ENCODE measurements at regions of chr10 and their contacts with region 1.

Region 1: GRCh38 chr10:49300140-49300974 is 1.4 kb downstream of the C10orf71 start:
- DNase-seq: no peak
- ATAC-seq: peak; percentile 10
- H3K4me3 Mint-ChIP-seq: no peak overlapping the region
- H3K27ac Mint-ChIP-seq: no peak overlapping the region
- H3K4me1 Mint-ChIP-seq: peaks cover 23% of the 10 kb centered on the region
- H3K27me3 Mint-ChIP-seq: no peaks in the 10 kb centered on the region
- CTCF ChIP-seq: no peak

Region 2: DNA sequence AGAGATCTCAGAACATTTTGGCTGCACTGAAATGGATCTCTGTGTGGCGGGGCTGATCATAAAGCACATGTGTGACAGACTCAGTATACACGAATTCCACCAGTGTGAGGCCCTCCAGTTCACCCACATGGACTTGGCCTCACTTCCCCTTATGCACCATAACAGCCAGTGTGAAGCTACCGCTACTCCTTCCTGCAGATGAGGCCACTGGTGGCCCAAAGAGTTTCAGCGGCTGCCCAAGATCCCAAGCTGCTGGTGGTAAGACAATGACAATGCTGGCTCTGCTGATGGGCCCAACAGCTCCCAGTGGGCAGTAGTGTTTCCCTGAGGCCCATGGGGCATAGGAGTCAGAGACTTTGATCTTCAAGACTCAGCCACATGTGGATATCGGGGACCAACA is 22.4 kb before region 1 on chr10:
- CTCF ChIA-PET with region 1: no interaction called
- POLR2A ChIA-PET with region 1: no interaction called
- intact Hi-C with region 1: loop called (anchors 1 kb)
- DNase-seq: no peak
- ATAC-seq: no peak
- H3K4me3 Mint-ChIP-seq: no peak overlapping the region
- H3K27ac Mint-ChIP-seq: no peak overlapping the region
- H3K4me1 Mint-ChIP-seq: peaks cover 8% of the 10 kb centered on the region
- H3K27me3 Mint-ChIP-seq: peaks cover 6% of the 10 kb centered on the region
- CTCF ChIP-seq: no peak

Region 3: GRCh38 chr10:49353026-49353894 is 52.9 kb after region 1 on chr10:
- CTCF ChIA-PET with region 1: no interaction called
- POLR2A ChIA-PET with region 1: no interaction called
- intact Hi-C with region 1: loop called (anchors 5 kb)
- DNase-seq: no peak
- ATAC-seq: no peak
- H3K4me3 Mint-ChIP-seq: no peak overlapping the region
- H3K27ac Mint-ChIP-seq: no peak overlapping the region
- H3K4me1 Mint-ChIP-seq: no peaks in the 10 kb centered on the region
- H3K27me3 Mint-ChIP-seq: peaks cover 4% of the 10 kb centered on the region
- CTCF ChIP-seq: no peak